Posterior cingulate gyrus (tissue), 11 donors: ENCODE measurements at regions of chr1 and their contacts with region 1.

Region 1: GRCh38 chr1:207868774-207869721 is 41.9 kb downstream of the CD34 start:
- DNase-seq: peak; percentile 65 to 97 (median 76)

Region 2: DNA sequence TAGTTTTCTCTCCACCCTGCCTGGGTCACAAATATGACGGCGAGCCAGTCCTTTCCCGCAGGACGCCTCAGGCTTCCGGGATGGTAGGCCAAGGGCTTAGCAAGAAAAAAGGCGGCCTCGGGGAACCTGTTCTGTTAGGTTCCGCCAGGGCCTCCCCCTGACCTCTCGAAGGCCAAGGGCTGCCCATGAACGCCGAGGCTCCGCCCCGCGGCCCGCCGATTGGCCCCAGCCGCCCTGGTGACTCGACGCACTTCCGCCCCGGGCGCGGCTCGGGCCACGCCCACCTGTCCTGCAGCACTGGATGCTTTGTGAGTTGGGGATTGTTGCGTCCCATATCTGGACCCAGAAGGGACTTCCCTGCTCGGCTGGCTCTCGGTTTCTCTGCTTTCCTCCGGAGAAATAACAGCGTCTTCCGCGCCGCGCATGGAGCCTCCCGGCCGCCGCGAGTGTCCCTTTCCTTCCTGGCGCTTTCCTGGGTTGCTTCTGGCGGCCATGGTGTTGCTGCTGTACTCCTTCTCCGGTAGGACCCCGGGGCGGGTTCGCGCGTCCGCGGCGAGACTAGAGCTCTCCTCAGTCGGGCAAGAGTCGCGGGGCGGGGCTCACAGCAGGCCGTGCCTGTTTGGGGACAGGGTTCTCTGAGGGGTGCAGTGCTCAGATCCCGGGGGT is 117.1 kb before region 1 on chr1 and contains the start of gene CD46:
- intact Hi-C with region 1: loop called (anchors 5 kb)
- DNase-seq: peak; percentile 88 to 99 (median 93)

Region 3: GRCh38 chr1:207811920-207812720 is 56.9 kb before region 1 on chr1:
- intact Hi-C with region 1: loop called (anchors 10 kb)
- DNase-seq: peak in 9 of 10 donors; percentile 59 to 95 (median 71)

Region 4: DNA sequence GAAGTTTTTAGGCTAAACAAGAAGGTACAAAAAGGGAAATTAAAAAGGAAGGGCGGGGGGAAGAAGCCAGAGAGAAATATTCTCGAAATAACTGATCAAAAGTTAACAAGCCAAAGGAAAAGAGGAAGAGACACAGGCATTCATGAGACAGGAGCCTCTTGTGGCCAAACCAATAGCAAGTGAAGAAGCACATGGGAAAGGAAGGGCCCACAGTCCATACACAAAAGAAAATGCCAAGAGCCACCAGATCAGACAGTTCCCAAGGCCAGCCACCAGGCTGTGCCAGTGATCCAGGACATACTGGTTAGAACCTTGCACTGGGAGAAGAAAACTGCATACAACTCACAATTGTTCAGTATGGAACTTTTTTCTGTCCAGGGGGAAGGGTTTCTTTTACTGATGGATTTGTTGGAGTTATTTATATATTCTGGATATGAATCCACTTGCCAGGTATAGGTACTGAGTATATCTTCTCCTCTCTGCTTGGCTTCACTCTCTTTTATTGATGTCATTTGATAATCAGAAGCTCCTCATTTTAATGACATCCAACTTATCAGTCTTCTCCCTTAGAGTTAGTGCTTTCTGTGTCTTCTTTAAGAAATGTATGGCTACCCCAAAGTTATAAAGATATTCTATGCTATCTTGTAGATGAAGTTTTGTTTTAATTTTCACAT is 40.4 kb before region 1 on chr1:
- intact Hi-C with region 1: loop called (anchors 2 kb)
- DNase-seq: peak in 6 of 10 donors; percentile 61 to 96 (median 70)

Region 5: DNA sequence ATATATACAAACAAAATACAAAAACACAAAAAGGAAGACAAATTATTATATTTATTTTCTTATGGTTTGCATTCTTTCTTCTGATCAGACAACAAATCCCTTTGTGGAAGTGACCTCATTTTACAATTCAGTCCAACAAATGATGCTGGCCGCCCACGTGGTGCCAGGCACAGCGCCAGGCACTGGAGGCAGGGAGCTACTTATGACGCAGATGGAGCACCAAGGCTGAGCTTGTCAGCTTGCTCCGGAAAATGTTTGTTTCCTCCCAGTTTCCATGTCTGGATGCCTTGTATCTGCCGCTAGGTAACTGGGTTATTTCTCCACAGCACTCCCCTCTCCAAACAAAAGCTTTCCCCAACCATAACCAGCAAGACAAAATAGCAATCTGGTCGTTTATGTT is 72.6 kb after region 1 on chr1:
- intact Hi-C with region 1: no loop called
- DNase-seq: peak; percentile 34 to 94 (median 64)